ENCODE measurements at regions of chr22 and their contacts with region 1.

Region 1: GRCh38 chr22:41367039-41367679 is 14.6 kb upstream of the TEF start:
- DNase-seq: peak; percentile 93 to 99 (median 98)

Region 2: DNA sequence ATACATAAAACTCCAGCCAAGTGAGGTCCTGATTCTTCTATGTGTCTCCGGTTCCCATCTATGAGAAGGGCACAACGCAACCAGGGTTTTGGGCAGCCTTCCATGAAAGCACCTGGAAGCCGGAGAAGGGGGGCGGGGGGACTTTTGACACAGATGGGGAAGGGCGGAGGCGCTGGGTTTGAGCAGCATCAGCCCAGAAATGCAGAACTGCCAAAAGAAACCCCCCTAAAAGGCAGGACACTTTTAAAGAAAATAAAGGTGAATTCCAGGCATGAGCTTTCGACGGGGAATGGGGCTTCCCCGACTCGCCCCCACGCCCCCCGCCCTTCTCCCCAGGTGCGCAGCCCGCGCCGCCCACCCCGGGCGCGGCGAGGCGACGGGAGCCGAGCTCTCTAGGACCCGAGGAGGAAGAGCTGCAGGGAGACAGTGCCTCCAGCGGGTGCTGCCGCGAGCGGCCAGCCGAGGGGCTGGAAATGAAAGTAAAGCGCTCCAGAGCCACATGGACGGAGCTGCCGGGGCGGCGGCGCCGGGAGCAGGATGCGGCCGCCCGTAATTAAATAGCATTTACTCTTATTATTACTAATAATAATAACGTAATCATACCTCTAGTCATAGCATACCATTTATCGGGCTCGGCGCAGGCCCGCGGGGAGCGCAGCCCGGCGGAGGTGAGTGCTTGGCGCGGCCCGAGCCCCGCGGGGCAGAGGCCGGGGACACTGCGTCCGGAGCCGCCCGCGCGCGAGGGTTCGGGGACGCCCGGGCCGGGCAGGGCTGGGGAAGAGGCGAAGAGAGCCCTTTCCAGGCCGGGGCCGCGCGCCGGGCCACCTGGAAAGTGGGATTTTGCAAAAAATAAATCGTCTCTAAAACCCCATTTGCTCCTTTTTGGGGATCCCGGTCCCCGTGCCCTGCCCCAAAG is 65.8 kb before region 1 on chr22 and contains the start of gene ZC3H7B:
- intact Hi-C with region 1: loop called (anchors 10 kb)
- DNase-seq: peak; percentile 67 to 94 (median 86)

Region 3: DNA sequence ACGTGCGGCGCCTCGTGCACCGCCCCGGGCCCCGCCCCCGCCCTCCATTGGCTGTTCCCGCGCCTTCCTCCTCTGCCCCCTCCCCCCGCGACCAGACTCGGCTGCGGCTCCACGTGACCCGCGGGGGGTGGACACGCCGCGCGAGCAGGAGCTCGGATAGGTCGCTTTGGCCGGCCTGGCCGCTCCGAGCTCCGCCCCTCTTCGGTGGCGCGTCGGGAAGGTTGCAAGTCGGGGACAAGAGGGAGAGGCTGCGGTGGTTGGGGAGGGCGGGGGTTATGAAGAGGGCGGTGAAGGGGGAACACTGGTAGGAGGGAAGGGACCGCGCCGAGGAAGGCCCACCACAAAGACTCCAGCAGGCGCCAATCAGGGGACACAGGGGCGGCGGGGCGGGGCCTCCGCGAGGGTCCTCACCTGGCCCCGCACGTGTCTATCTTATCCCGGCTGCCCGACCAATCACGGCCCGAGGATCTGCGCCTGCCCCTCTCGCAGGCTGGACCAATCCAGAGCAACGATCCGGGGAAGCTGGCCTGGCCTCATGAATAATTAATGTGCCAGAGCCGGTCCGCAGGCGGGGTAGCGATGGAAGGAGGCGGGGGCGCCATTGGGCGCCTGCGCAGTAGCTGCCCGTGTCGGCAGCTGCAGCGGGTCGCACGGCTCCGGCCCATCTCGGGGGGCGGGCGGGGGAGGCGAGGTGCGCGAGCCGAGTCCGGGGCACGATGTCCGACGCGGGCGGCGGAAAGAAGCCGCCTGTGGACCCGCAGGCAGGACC is 14.4 kb after region 1 on chr22 and contains the start of gene TEF:
- intact Hi-C with region 1: loop called (anchors 2 kb)
- DNase-seq: peak; percentile 98 to 100 (median 99)

Region 4: GRCh38 chr22:41425660-41426365 is 58.7 kb after region 1 on chr22:
- intact Hi-C with region 1: no loop called
- DNase-seq: peak in 1 of 42 donors; percentile 22

Measured in head of caudate nucleus (tissue), 42 donors.